ENCODE measurements at regions of chrX and their contacts with region 1.

Region 1: GRCh38 chrX:130028196-130028595 is 45.8 kb downstream of the BCORL1 start:
- DNase-seq: peak in 1 of 2 experiments; percentile 56
- H3K4me3 ChIP-seq: no peak overlapping the region
- H3K4me3 Mint-ChIP-seq: no peak overlapping the region
- H3K27ac Mint-ChIP-seq: no peak overlapping the region
- H3K4me1 ChIP-seq: no peaks in the 10 kb centered on the region
- H3K4me1 Mint-ChIP-seq: no peaks in the 10 kb centered on the region
- H3K27me3 ChIP-seq: no peaks in the 10 kb centered on the region
- H3K27me3 Mint-ChIP-seq: no peaks in the 10 kb centered on the region
- CTCF ChIP-seq: peak; percentile 43 to 70

Region 2: DNA sequence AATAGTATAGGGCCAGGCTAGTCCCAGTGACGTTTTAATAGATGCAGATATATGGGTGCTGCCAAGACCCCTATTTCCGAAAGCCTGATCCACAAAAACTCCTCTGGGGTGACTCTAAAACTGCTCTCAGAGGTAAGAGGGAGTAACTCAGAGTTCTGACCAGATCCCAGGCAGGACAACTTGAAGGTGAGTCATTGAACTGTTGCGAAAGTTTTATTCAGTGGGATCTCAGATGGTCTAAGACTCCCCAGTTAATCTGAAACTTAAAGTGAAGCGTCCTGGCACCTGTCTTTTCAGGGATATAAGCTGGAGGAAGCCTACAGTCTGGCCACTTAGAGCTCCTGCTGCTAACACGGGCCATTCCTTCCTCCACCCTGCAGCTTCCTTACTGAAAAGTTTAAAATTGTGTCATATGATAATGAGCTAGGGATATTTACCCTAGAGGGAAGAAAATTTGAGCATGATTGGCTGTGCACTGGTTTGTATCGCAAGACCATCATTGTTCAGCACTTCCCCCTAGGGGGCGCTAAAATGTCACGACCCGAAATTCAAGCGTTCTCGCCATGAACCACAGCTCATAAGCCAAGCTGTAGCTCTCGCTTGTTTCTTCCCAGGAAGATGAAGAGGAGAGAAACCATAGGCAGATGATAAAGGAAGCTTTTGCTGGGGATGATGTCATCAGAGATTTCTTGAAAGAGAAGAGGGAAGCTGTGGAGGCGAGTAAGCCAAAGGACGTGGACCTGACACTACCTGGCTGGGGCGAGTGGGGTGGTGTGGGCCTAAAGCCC is 102.7 kb before region 1 on chrX:
- CTCF ChIA-PET with region 1: interaction called, 13 read pairs
- POLR2A ChIA-PET with region 1: no interaction called
- intact Hi-C with region 1: loop called (anchors 2 kb)
- DNase-seq: peak; percentile 57 to 75
- H3K4me3 ChIP-seq: no peak overlapping the region
- H3K4me3 Mint-ChIP-seq: no peak overlapping the region
- H3K27ac Mint-ChIP-seq: no peak overlapping the region
- H3K4me1 ChIP-seq: no peaks in the 10 kb centered on the region
- H3K4me1 Mint-ChIP-seq: no peaks in the 10 kb centered on the region
- H3K27me3 ChIP-seq: no peaks in the 10 kb centered on the region
- H3K27me3 Mint-ChIP-seq: no peaks in the 10 kb centered on the region
- CTCF ChIP-seq: peak; percentile 54 to 59

Region 3: GRCh38 chrX:130144509-130144908 is 116.3 kb after region 1 on chrX:
- CTCF ChIA-PET with region 1: no interaction called
- POLR2A ChIA-PET with region 1: no interaction called
- intact Hi-C with region 1: no loop called
- DNase-seq: no peak
- H3K4me3 ChIP-seq: no peak overlapping the region
- H3K4me3 Mint-ChIP-seq: no peak overlapping the region
- H3K27ac Mint-ChIP-seq: peak overlapping the region; percentile 71
- H3K4me1 ChIP-seq: no peaks in the 10 kb centered on the region
- H3K4me1 Mint-ChIP-seq: no peaks in the 10 kb centered on the region
- H3K27me3 ChIP-seq: no peaks in the 10 kb centered on the region
- H3K27me3 Mint-ChIP-seq: no peaks in the 10 kb centered on the region
- CTCF ChIP-seq: no peak

Measured in Caco-2 (cell line).